Activated CD8-positive, alpha-beta memory T cell treated with anti-CD3 and anti-CD28 coated beads, Interleukin-2, amount 10 ng/mL, durations not matched to agents 7 days and 5 days (primary cell): ENCODE measurements at regions of chr16 and their contacts with region 1.

Region 1: GRCh38 chr16:67521095-67521804 is 7.4 kb upstream of the RIPOR1 start:
- DNase-seq: peak; percentile 99
- ATAC-seq: peak; percentile 91
- H3K4me3 Mint-ChIP-seq: peak overlapping the region; percentile 81
- H3K27ac Mint-ChIP-seq: peak overlapping the region; percentile 96
- H3K4me1 Mint-ChIP-seq: peaks cover 36% of the 10 kb centered on the region
- H3K27me3 Mint-ChIP-seq: peaks cover 7% of the 10 kb centered on the region

Region 2: GRCh38 chr16:67437513-67437912 is 83.7 kb before region 1 on chr16:
- CTCF ChIA-PET with region 1: no interaction called
- DNase-seq: no peak
- ATAC-seq: no peak
- H3K4me3 Mint-ChIP-seq: no peak overlapping the region
- H3K27ac Mint-ChIP-seq: no peak overlapping the region
- H3K4me1 Mint-ChIP-seq: peaks cover 3% of the 10 kb centered on the region
- H3K27me3 Mint-ChIP-seq: peaks cover 2% of the 10 kb centered on the region

Region 3: GRCh38 chr16:67480833-67481560 is 40.3 kb before region 1 on chr16 and contains the start of gene ATP6V0D1:
- CTCF ChIA-PET with region 1: interaction called, 732 read pairs
- DNase-seq: peak; percentile 99
- ATAC-seq: peak; percentile 88
- H3K4me3 Mint-ChIP-seq: peak within 1 kb of the TSS; percentile 99
- H3K27ac Mint-ChIP-seq: peak within 1 kb of the TSS; percentile 99
- H3K4me1 Mint-ChIP-seq: peaks cover 31% of the 10 kb centered on the region
- H3K27me3 Mint-ChIP-seq: no peaks in the 10 kb centered on the region
- total RNA-seq, gene ATP6V0D1: 42.1 to 58.3 TPM

Region 4: GRCh38 chr16:67546761-67547422 is 25.6 kb after region 1 on chr16:
- CTCF ChIA-PET with region 1: interaction called, 252 read pairs
- DNase-seq: peak; percentile 81
- ATAC-seq: peak; percentile 57
- H3K4me3 Mint-ChIP-seq: no peak overlapping the region
- H3K27ac Mint-ChIP-seq: peak overlapping the region; percentile 97
- H3K4me1 Mint-ChIP-seq: peaks cover 40% of the 10 kb centered on the region
- H3K27me3 Mint-ChIP-seq: no peaks in the 10 kb centered on the region

Region 5: GRCh38 chr16:67561824-67562525 is 40.7 kb after region 1 on chr16:
- CTCF ChIA-PET with region 1: interaction called, 28 read pairs
- DNase-seq: peak; percentile 100
- ATAC-seq: peak; percentile 88
- H3K4me3 Mint-ChIP-seq: peak overlapping the region; percentile 89
- H3K27ac Mint-ChIP-seq: peak overlapping the region; percentile 94
- H3K4me1 Mint-ChIP-seq: peaks cover 44% of the 10 kb centered on the region
- H3K27me3 Mint-ChIP-seq: no peaks in the 10 kb centered on the region

Region 6: GRCh38 chr16:67652578-67653127 is 131.4 kb after region 1 on chr16:
- CTCF ChIA-PET with region 1: interaction called, 199 read pairs
- DNase-seq: no peak
- ATAC-seq: no peak
- H3K4me3 Mint-ChIP-seq: no peak overlapping the region
- H3K27ac Mint-ChIP-seq: no peak overlapping the region
- H3K4me1 Mint-ChIP-seq: peaks cover 3% of the 10 kb centered on the region
- H3K27me3 Mint-ChIP-seq: no peaks in the 10 kb centered on the region

Region 7: GRCh38 chr16:67719048-67719777 is 198.0 kb after region 1 on chr16 and contains the start of gene GFOD2:
- CTCF ChIA-PET with region 1: interaction called, 19 read pairs
- DNase-seq: peak; percentile 98
- ATAC-seq: peak; percentile 95
- H3K4me3 Mint-ChIP-seq: peak within 1 kb of the TSS; percentile 88
- H3K27ac Mint-ChIP-seq: peak within 1 kb of the TSS; percentile 98
- H3K4me1 Mint-ChIP-seq: peaks cover 37% of the 10 kb centered on the region
- H3K27me3 Mint-ChIP-seq: no peaks in the 10 kb centered on the region
- total RNA-seq, gene GFOD2: 15.1 to 15.8 TPM

Region 8: DNA sequence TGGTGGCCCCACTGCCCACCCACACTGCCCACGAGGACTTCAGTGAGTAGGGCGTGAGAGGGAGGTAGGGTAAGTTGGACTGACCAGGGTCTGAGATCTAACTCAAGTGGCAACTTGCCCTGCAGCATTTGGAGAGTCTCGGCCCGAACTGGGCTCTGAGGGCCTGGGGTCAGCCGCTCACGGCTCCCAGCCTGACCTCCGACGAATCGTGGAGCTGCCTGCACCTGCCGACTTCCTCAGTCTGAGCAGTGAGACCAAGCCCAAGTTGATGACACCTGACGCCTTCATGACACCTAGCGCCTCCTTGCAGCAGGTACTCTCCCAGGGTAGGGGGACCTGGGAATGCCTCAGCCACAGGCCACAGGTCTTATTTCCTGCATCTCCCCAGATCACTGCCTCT is 358.2 kb after region 1 on chr16:
- CTCF ChIA-PET with region 1: no interaction called
- DNase-seq: no peak
- ATAC-seq: no peak
- H3K4me3 Mint-ChIP-seq: no peak overlapping the region
- H3K27ac Mint-ChIP-seq: no peak overlapping the region
- H3K4me1 Mint-ChIP-seq: peaks cover 17% of the 10 kb centered on the region
- H3K27me3 Mint-ChIP-seq: no peaks in the 10 kb centered on the region

Region 9: GRCh38 chr16:67942200-67942509 is 420.9 kb after region 1 on chr16:
- CTCF ChIA-PET with region 1: interaction called, 12 read pairs
- DNase-seq: peak; percentile 59
- ATAC-seq: peak; percentile 60
- H3K4me3 Mint-ChIP-seq: no peak overlapping the region
- H3K27ac Mint-ChIP-seq: no peak overlapping the region
- H3K4me1 Mint-ChIP-seq: peaks cover 30% of the 10 kb centered on the region
- H3K27me3 Mint-ChIP-seq: no peaks in the 10 kb centered on the region